ENCODE measurements at regions of chr15 and their contacts with region 1.

Region 1: DNA sequence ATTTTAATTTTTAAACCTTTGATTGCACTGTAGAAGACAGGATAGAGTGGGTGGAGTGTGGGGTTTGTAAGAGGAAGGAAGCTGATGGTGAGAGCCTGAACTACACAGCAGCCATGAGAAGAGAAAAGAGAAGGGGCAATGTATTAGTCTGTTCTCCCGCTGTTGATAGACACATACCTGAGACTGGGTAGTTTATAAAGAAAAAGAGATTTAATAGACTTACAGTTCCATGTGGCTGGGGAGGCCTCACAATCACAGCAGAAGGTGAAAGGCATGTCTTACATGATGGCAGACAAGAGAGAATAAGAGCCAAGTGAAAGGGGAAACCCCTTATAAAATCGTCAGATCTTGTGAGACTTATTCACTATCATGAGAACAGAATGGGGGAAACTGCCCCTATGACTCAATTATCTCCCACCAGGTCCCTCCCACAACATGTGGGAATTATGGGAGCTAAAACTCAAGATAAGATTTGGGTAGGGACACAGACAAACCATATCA is 37.3 kb downstream of the STARD5 start:
- DNase-seq: no peak
- H3K4me3 ChIP-seq: no peak overlapping the region
- H3K27ac ChIP-seq: no peak overlapping the region
- H3K27me3 ChIP-seq: no peaks in the 10 kb centered on the region
- CTCF ChIP-seq: no peak

Region 2: DNA sequence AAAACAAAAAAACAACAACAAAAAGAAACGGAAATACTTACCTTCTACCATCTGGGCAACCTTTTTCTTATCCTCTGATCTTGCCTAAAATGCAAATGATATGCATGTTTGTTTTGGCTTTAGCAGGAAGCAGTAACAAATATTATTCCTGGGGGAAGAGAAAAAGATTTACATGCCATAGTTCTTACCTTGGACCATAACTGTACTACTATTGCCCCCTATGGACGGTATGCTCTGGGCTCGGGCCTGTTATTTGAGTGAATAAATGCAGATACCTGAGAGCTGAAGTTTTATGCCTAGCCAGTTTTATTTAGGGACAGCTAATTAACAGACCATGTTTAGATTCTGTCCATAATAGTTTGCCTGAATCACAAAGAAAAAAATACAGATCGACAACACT is 49.9 kb after region 1 on chr15:
- intact Hi-C with region 1: loop called in 1 of 2 experiments (anchors 5 kb)
- DNase-seq: no peak
- H3K4me3 ChIP-seq: no peak overlapping the region
- H3K27ac ChIP-seq: no peak overlapping the region
- H3K27me3 ChIP-seq: no peaks in the 10 kb centered on the region
- CTCF ChIP-seq: peak in 38 of 56 donors; percentile 7 to 55 (median 28)

Region 3: DNA sequence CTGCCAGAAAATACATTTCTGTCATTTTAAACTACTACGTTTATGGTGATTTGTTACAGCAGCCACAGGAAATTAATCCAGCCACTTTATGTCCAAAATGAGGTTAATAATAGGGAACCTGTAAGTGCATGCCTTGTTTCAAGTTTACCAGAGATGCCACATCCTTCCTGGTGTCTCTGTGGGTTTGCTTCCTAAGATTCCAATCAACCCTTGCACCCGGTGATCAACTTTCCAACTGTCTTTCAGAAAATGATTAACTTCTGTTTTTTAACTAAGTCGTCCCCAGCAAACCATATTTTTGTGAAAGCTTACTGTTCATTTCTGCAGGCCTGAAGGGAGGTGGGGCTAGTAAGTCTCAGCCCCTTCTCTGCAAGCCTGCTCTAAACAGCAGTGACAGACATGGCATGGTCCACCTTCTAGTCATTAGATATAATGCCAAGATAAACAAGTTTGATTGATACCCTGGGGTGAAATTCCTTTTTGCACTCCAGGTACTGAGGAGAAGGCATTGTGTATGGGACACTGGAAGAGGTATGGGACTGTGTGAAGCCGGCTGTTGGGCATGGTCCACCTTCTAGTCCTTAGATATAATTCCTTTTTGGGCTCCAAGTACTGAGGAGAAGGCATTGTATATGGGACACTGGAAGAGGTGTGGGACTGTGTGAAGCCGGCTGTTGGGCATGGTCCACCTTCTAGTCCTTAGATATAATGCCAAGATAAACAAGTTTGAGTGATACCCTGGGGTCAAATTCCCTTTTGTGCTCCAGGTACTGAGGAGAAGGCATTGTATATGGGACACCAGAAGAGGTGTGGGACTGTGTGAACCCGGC is 98.4 kb after region 1 on chr15:
- intact Hi-C with region 1: loop called in 1 of 2 experiments (anchors 5 kb)
- DNase-seq: no peak
- H3K4me3 ChIP-seq: no peak overlapping the region
- H3K27ac ChIP-seq: no peak overlapping the region
- H3K27me3 ChIP-seq: no peaks in the 10 kb centered on the region
- CTCF ChIP-seq: no peak

Region 4: GRCh38 chr15:81449836-81450495 is 163.3 kb after region 1 on chr15:
- intact Hi-C with region 1: no loop called
- DNase-seq: no peak
- H3K4me3 ChIP-seq: no peak overlapping the region
- H3K27ac ChIP-seq: no peak overlapping the region
- H3K27me3 ChIP-seq: no peaks in the 10 kb centered on the region
- CTCF ChIP-seq: no peak